Activated B cell treated with CpG ODN at 0.5 μM for 24 hours (primary cell): ENCODE measurements at regions of chr2 and their contacts with region 1.

Region 1: GRCh38 chr2:231104115-231104713 is 20.6 kb downstream of the HTR2B start:
- DNase-seq: peak; percentile 34
- ATAC-seq: peak; percentile 91
- H3K4me3 Mint-ChIP-seq: no peak overlapping the region
- H3K27ac Mint-ChIP-seq: no peak overlapping the region
- H3K4me1 Mint-ChIP-seq: peaks cover 3% of the 10 kb centered on the region
- H3K27me3 Mint-ChIP-seq: no peaks in the 10 kb centered on the region
- CTCF ChIP-seq: no peak

Region 2: DNA sequence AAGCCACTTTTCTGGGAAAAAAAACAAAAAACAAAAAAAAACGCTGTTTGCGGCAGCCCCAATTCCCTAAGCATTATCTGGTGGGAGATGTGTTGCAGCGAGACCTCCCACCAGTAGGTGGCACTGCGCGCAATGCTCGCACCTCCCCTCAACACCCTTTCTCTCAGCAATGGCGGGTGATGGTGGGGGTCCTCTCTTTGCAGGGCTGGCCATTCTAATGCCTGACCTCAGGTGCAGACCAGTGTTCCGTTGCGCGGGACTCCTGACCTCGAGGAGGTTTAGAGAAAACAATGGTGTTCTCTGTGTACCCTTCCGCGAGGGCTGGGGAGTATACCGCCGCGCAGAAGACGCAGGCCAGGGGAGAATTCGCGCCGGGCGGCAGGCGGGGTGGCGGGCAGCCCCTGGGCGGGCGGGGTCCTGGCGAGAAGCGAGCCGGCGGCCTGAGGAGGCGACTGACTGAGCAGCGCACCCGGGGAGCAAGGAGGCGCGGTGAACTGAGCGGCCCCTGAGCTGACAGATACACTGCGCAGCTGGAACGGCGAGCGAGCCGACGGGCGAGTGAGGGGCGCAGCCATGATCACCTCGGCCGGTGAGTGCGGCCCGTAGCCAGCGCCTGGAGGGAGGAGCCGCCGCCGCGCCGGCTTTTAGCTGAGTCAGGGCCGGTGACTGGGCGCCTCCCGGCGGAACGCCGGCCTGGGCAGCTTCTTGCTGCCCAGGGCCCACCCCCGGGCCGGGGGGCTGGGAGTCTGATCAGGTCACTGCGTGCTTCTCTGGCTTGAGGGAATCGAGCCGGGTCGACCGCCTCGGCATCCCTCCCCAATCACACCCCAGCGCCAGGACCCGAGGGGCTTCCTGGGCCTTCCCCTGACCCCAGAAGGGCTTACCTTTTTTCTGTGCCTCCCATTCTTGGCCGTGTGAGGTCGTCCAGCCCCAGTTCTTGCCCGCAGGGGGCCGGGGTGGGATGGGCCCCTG is 47.5 kb before region 1 on chr2 and contains the start of gene PSMD1:
- CTCF ChIA-PET with region 1: no interaction called
- POLR2A ChIA-PET with region 1: no interaction called
- intact Hi-C with region 1: no loop called
- DNase-seq: peak; percentile 90
- ATAC-seq: peak; percentile 85
- H3K4me3 Mint-ChIP-seq: peak within 1 kb of the TSS; percentile 98
- H3K27ac Mint-ChIP-seq: peak within 1 kb of the TSS; percentile 100
- H3K4me1 Mint-ChIP-seq: peaks cover 43% of the 10 kb centered on the region
- H3K27me3 Mint-ChIP-seq: peaks cover 3% of the 10 kb centered on the region
- CTCF ChIP-seq: peak; percentile 65
- total RNA-seq, gene PSMD1: 99.9 and 105 TPM in 2 replicates

Region 3: DNA sequence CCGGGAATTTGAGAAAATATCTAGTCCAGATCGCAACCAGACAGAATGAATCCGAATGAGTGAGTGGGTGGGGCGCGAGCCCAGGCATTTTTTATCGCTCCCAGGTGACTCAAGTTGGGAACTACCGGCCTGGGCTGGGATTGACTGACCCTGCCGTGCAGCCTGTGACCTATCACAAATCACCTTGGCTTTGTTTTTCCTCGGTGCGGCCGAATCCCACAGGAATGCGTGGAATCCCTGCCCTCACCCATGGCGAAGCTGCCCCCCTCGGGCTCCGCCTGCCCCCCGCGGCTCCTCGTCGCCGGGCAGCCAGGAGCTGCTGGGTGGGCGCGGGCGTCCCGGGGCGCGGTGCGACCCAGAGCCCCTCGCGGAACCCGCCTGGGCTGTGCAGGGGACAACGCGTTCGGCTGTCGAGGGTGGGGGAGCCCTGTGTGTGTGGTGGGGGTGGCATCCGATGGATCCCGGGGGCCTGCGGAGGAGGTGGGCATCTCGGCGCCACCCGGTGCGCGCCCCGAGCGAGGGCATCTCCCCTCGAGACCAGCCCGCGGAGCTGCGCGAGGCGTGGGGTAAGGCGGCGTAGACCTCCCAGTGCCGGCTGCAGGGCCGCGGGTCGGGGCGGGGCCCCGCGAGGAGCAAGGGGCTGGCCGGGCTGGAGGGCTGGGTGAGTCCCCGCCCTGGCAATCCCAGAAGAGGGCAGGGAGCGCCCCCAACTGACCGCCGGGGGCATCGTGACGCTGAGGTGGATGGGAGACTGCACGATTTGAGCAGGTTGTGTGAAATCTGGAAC is 307.8 kb after region 1 on chr2:
- CTCF ChIA-PET with region 1: interaction called, 56 read pairs
- POLR2A ChIA-PET with region 1: no interaction called
- intact Hi-C with region 1: loop called (anchors 1 kb)
- DNase-seq: peak; percentile 86
- ATAC-seq: peak; percentile 100
- H3K4me3 Mint-ChIP-seq: peak overlapping the region; percentile 56
- H3K27ac Mint-ChIP-seq: no peak overlapping the region
- H3K4me1 Mint-ChIP-seq: peaks cover 9% of the 10 kb centered on the region
- H3K27me3 Mint-ChIP-seq: peaks cover 13% of the 10 kb centered on the region
- CTCF ChIP-seq: no peak

Region 4: DNA sequence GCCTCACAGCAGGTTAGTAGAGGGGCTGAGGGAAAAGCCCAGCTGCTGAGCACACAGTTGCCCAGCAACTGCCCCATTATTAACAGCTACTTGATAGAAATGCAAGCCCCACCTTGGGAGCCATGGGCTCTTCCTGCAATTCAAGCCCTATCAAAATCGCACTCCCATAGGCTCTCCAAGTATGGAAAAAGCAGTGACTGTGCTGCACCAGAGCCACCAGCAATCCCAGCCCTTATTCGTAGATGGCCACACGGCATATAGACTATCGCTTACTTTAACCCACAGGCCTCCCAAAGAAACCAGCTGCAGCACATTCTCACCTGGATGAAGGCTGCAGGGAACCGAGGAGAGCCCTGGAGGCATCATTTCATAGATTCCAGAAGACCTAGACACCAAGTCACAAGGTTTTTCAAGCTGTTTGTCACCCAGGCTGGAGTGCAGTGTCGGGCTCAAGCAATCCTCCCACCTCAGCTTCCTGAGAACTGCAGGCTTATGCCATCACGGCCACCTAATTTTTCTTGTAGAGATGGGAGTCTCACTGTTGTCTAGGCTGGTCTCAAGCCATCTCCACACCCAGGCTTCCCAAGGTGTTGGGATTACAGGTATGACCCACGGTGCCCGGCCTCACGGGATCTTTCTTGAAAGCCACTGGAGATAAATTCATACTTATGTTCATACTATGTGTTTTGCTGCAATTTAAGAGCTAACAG is 348.7 kb after region 1 on chr2:
- CTCF ChIA-PET with region 1: interaction called, 45 read pairs
- POLR2A ChIA-PET with region 1: interaction called, 8 read pairs
- intact Hi-C with region 1: loop called (anchors 1 kb)
- DNase-seq: no peak
- ATAC-seq: no peak
- H3K4me3 Mint-ChIP-seq: no peak overlapping the region
- H3K27ac Mint-ChIP-seq: no peak overlapping the region
- H3K4me1 Mint-ChIP-seq: peaks cover 7% of the 10 kb centered on the region
- H3K27me3 Mint-ChIP-seq: no peaks in the 10 kb centered on the region
- CTCF ChIP-seq: no peak

Region 5: DNA sequence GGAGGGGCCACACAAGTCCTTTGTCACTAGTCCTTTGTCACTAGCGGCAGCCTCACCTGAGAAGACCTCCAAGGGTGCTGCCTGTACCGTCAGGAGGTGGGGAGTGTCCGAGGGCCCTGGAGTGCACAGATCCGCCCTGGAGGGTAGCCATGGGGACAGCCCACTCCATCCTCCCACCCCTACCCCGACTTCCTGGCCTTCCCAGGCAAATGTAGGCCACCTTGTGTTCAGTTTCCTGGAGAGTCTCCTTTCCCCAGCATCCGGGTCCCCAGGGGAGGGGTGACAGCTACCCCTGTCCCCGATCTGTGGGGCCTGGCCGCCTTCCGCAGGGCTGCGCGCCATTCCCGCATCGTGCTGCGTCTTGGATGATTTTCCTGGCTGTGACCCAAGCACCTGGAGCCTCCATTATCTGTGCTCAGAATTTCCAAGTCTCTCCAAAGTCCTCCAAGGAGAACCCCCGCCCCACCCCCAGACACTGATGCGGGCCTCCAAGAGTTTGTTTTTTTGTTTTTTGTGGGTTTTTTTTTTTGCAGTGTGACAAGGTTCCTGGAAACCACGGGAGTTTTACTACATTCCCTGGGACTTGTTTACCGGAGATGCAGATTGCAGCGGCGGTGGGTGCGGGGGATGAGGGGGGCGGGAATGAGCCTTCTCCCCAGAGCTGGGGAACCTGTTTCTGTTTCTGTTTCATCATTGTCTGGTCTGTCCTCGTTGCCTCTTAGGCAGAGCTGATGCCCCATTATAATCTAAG is 517.1 kb after region 1 on chr2:
- CTCF ChIA-PET with region 1: no interaction called
- POLR2A ChIA-PET with region 1: no interaction called
- intact Hi-C with region 1: no loop called
- DNase-seq: no peak
- ATAC-seq: peak; percentile 28
- H3K4me3 Mint-ChIP-seq: no peak overlapping the region
- H3K27ac Mint-ChIP-seq: no peak overlapping the region
- H3K4me1 Mint-ChIP-seq: peaks cover 3% of the 10 kb centered on the region
- H3K27me3 Mint-ChIP-seq: no peaks in the 10 kb centered on the region
- CTCF ChIP-seq: no peak